ENCODE measurements at regions of chr17 and their contacts with region 1.

Region 1: GRCh38 chr17:69516911-69517310 is 102.4 kb downstream of the MAP2K6 start:
- DNase-seq: no peak
- H3K4me3 ChIP-seq: no peak overlapping the region
- H3K27ac ChIP-seq: no peak overlapping the region
- H3K4me1 ChIP-seq: no peaks in the 10 kb centered on the region
- H3K27me3 ChIP-seq: no peaks in the 10 kb centered on the region
- CTCF ChIP-seq: no peak

Region 2: DNA sequence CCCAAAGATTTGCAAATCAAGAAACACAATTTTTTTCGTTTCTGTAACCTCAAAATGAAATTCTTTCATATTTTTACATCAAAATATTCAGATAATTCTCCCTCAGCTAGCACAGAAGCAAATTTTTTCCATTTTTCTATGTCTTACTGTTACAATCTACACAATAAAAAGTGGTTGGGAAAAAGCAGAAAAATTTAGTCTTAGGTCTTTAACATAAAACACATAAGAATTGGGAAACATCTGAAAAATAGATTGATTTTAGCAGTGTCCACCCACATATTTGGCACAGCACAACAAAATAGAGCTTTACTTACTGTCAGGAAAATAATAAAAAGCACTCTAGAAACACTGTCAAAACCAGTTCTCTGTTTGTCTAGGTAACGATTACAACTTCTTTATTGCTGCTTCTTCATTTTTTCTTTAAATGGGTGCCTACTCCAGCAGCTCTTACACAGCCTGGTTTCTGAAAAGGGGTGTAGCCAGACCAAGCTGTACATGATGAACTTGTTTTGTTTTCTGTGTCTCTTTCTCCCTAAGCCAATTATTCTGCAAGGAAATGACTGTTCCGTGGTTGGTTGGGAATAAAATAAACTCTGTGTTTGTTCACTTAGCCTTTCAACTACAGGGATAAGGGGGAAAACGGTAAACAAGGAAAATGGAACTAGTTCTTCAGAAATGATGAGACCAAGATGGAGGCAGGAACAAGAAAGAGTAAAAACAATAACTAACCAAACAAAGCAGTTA is 375.3 kb before region 1 on chr17 and contains the start of gene ABCA6:
- CTCF ChIA-PET with region 1: no interaction called
- POLR2A ChIA-PET with region 1: no interaction called
- intact Hi-C with region 1: no loop called
- DNase-seq: peak; percentile 65
- H3K4me3 ChIP-seq: peak within 1 kb of the TSS; percentile 15
- H3K27ac ChIP-seq: peak within 1 kb of the TSS; percentile 55
- H3K4me1 ChIP-seq: peaks cover 33% of the 10 kb centered on the region
- H3K27me3 ChIP-seq: no peaks in the 10 kb centered on the region
- CTCF ChIP-seq: no peak
- total RNA-seq, gene ABCA6: 2.1 and 3.5 TPM in 2 replicates

Region 3: DNA sequence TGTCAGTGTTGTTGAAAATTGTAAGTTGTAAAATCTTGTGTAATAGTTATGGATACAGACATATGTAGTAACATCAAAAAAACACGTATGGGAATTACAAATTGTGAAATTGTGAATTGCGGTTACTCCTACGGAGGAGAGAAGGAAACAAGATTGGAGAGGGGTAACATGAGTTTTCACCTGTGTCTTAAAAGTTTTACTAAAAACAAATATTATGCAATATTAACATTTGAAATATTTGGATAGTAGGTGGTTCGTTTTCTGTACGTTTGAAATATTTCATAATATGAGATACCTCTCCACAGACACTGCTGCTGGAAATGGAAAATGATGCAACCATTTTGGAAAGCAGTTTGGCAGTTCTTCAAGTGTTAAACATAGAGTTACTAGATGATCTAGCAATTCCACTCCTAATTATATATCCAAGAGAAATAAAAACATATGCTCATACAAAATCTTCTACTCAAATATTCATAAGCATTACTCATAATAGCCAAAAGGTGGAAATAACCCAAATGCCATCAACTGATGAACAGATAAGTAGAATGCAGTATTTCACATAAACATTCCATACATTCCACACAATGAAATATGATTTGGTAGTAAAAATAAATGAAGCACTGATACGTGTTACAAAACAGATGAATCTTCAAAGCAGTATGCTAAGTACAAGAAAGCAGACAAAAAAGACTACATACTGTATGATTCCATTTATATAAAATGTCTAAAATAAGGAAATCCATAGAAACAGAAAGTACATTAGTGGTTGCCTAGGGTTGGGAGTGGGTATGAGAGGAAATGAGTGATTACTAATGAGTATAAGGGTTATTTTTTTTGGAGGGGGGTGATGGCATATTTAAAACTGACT is 247.5 kb before region 1 on chr17:
- CTCF ChIA-PET with region 1: no interaction called
- POLR2A ChIA-PET with region 1: no interaction called
- intact Hi-C with region 1: loop called (anchors 5 kb)
- DNase-seq: peak; percentile 54
- H3K4me3 ChIP-seq: no peak overlapping the region
- H3K27ac ChIP-seq: peak overlapping the region; percentile 57
- H3K4me1 ChIP-seq: peaks cover 19% of the 10 kb centered on the region
- H3K27me3 ChIP-seq: no peaks in the 10 kb centered on the region
- CTCF ChIP-seq: no peak

Region 4: DNA sequence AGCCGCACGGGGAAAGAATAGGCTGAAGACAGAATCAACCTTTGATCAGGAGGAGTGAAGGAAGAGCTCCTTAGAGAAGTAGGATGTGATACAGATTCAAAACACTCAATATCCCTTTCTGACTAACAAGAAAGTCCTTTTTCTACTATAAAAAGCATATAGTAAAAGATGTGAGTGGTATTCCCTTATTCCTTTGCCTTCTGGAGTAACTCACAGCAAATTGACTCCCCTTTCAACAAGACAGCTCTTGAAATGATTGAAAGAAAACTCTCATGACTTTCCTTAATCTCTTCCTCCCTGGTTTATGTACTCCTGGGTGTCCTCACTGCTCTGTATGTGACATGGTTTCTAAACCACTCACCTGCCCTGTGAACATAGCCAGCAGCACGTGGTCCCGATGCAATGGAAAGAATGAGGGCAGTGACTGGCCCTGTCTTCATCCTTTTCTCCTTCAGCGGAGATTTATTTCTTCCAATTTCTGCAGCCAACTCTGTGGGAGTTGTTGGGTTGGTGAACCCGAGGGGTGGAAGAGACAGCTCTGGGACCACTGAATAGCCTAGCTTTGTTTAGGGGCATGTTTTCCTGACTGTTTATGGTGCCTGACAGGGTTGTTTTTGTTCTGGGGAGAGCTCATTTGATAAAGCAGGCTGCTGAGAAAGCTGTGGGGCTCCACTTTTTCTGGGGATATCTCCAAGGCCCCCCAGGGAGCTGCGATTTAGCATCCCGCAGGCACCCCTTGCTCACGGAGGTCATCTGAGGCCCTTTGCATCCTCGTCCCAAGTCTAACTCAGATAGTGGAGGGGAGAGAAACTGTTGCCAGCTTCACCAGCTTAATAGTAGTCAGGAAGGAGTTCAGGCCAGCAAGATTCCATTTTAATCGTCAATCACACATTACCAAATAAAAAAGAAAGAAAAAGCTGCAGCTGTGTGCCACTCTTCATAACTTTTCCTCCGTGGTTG is 55.7 kb before region 1 on chr17:
- CTCF ChIA-PET with region 1: no interaction called
- POLR2A ChIA-PET with region 1: no interaction called
- intact Hi-C with region 1: no loop called
- DNase-seq: no peak
- H3K4me3 ChIP-seq: no peak overlapping the region
- H3K27ac ChIP-seq: no peak overlapping the region
- H3K4me1 ChIP-seq: peaks cover 9% of the 10 kb centered on the region
- H3K27me3 ChIP-seq: no peaks in the 10 kb centered on the region
- CTCF ChIP-seq: no peak